ENCODE measurements at regions of chr14 and their contacts with region 1.

Region 1: DNA sequence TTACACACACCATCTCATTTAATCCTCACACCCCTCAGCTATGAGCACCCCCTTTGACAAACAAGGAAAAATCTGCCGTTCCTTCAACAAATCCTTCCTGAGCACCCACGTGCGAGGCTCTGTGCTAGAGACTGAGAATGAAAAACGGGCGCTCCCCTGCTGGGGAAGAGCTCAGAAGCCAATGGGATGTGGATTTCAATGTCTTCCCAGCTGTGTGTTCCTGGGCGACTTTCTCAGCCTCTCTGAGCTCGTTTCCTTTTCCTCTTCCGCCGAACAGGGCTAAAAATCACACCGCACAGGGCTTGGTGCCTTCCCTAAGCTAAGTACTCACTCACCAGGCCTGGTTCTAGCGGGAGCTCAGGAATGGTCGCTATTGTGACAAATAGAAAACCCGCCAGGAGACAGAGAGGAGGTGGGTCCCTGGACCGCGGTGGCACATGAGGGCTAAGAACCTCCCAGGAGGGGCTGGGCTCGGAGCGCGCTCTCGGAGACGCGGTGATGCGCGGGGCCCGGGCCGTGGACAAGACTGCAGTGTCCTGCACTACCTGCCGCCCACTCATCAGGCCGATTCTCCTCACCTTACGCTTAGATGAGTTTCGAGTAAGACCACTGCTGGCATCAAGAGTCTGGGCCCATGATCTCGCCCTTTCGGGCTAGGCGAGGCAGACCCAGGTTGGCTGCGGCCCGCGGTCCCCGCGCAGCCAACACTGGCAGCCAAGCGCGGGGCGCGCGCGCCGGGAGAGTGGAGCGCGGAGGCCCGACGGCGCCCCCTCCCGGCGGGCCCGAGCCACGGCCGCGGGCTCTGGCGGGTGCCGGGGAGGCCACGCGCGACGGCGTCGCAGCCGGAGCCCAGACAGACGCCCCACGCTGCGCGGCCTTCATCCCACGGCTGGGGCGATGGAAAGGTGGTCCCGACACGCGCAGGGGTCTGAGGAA is 17.0 kb downstream of the ZDHHC22 start:
- DNase-seq: no peak
- H3K4me3 ChIP-seq: peak overlapping the region; percentile 58
- CTCF ChIP-seq: peak; percentile 16

Region 2: GRCh38 chr14:76977793-76978720 is 146.6 kb before region 1 on chr14:
- CTCF ChIA-PET with region 1: no interaction called
- POLR2A ChIA-PET with region 1: no interaction called
- DNase-seq: peak; percentile 40
- H3K4me3 ChIP-seq: no peak overlapping the region
- CTCF ChIP-seq: no peak

Region 3: DNA sequence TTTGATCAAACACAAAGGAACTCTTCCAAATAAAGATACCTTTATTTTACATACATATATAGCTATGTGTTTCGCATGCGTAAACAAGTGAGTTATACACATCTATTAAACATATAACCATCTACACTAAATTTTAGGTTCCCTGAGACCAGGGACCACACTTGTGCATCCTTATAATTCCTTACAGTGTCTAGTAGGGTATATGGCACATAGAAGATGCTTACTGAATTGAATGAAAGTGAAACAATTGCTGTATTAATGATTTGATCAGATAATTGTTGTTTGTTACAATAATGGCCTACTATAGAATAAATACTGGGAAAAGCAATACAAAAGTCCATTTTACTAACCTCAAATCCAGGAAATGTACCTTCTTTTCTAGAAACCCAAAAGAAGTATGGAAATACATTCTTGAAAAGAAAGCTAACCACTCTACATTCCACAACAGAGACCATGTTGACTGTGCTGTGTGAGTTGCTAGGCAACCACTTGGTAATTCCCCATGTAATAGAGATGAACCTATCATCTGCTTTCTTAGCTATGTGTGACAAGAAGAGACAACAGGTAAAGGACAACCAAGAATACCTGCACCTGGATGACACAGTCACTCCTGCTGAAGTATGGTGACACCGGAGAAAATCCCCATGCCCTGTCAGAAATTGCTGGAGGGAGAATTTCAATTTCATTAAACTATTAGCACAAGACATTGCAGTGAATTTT is 38.4 kb before region 1 on chr14:
- CTCF ChIA-PET with region 1: no interaction called
- POLR2A ChIA-PET with region 1: no interaction called
- DNase-seq: no peak
- H3K4me3 ChIP-seq: no peak overlapping the region
- CTCF ChIP-seq: no peak

Region 4: GRCh38 chr14:77111043-77111442 is 13.6 kb before region 1 on chr14:
- CTCF ChIA-PET with region 1: interaction called, 24 read pairs
- POLR2A ChIA-PET with region 1: no interaction called
- DNase-seq: no peak
- H3K4me3 ChIP-seq: no peak overlapping the region
- CTCF ChIP-seq: no peak

Region 5: DNA sequence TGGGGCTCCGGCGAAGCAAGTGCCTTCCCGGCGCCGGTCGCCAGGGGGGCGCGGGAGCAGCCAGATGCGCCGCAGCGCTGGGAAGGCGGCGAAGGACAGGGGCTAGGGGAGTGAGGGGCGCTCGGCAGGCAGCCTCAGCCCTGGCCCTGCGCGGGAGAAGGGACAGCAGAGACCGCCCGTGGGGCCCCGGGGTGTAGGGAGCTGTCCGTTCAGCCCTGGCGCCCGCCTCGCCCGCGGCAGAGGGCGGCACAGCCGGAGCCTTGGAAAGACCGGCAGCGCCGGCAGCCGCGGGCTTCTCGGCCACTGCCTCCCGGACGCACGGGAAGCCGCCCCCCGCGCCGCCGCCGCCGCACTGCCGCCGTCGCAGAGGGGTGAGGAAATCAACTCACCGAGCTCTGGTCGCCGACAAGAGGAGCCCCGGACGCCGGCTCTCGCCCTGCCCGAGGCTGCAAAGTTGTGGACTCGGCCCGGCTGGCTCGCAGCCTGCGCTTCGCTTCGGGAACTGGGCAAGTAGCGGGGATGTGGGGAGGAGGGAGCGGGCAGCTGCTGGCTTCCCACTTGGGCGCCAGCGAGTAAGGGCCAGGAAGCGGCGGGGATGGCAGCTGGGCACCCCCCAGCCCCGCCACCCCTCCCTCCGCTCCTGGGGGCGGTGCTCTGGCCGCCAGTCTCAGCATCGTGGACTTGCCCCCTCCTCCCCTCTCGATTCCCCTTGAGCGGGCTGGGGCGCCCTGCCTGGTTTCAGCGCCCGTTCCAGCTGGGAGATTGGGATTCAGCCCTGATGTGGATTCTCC is 16.8 kb after region 1 on chr14 and contains the start of gene ZDHHC22:
- CTCF ChIA-PET with region 1: interaction called, 14 read pairs
- POLR2A ChIA-PET with region 1: no interaction called
- DNase-seq: no peak
- H3K4me3 ChIP-seq: peak within 1 kb of the TSS; percentile 38
- CTCF ChIP-seq: peak; percentile 46